WTC11 (cell line): ENCODE measurements at regions of chr2 and their contacts with region 1.

Region 1: DNA sequence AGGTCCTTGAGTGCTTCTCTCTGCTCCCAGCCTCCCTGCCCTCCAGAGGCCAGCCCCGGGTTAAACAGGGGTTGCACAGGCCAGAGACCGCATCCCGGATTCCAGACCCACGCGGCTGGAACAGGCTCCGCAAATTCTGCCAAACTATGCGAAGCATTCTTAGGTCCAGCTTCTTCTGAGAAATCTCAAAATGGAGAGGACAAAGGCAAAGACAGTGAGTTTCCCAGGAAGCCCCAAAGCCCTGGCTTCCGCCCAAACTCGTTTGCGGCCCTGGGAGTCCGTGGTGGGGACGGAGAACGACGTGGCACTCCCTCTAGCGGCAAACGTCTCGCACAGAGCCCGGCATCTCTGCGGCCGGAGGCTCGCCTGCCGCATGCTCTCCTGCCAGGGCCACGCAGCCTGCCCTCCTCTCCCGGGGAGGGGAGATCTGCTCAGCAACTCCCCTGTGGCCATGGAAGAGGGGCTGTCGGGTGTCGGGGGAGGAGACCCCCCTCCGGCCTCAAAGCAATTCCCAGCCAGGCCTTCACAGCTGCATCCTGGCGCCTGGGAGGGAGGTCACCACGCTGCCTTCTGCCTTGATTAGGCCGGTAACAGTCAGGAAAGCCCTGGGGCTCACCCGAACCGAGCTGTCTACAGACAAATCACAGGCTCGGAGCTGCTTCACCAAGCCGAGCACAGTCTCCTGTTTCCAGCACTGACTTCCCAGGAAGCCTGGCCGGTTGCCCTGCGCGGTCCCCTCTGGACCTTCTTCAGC is 33.4 kb upstream of the KLHL29 start:
- DNase-seq: peak; percentile 85
- ATAC-seq: peak; percentile 97
- H3K4me3 Mint-ChIP-seq: no peak overlapping the region
- H3K27ac Mint-ChIP-seq: no peak overlapping the region
- H3K4me1 Mint-ChIP-seq: peaks cover 8% of the 10 kb centered on the region
- H3K27me3 Mint-ChIP-seq: peaks cover 38% of the 10 kb centered on the region
- CTCF ChIP-seq: peak; percentile 65

Region 2: GRCh38 chr2:23330214-23330613 is 21.4 kb before region 1 on chr2:
- CTCF ChIA-PET with region 1: interaction called, 12 read pairs
- POLR2A ChIA-PET with region 1: no interaction called
- DNase-seq: peak; percentile 79
- ATAC-seq: peak; percentile 92
- H3K4me3 Mint-ChIP-seq: no peak overlapping the region
- H3K27ac Mint-ChIP-seq: no peak overlapping the region
- H3K4me1 Mint-ChIP-seq: peaks cover 4% of the 10 kb centered on the region; the same call in 1 of the 2 replicates
- H3K27me3 Mint-ChIP-seq: no peaks in the 10 kb centered on the region; the same call in 1 of the 2 replicates
- CTCF ChIP-seq: no peak

Region 3: GRCh38 chr2:23380562-23381065 is 29.0 kb after region 1 on chr2:
- CTCF ChIA-PET with region 1: no interaction called
- POLR2A ChIA-PET with region 1: no interaction called
- DNase-seq: no peak
- ATAC-seq: no peak; the same call in 1 of the 2 replicates
- H3K4me3 Mint-ChIP-seq: no peak overlapping the region
- H3K27ac Mint-ChIP-seq: no peak overlapping the region; the same call in 1 of the 2 replicates
- H3K4me1 Mint-ChIP-seq: peaks cover 17% of the 10 kb centered on the region
- H3K27me3 Mint-ChIP-seq: peaks cover 45% of the 10 kb centered on the region
- CTCF ChIP-seq: no peak

Region 4: DNA sequence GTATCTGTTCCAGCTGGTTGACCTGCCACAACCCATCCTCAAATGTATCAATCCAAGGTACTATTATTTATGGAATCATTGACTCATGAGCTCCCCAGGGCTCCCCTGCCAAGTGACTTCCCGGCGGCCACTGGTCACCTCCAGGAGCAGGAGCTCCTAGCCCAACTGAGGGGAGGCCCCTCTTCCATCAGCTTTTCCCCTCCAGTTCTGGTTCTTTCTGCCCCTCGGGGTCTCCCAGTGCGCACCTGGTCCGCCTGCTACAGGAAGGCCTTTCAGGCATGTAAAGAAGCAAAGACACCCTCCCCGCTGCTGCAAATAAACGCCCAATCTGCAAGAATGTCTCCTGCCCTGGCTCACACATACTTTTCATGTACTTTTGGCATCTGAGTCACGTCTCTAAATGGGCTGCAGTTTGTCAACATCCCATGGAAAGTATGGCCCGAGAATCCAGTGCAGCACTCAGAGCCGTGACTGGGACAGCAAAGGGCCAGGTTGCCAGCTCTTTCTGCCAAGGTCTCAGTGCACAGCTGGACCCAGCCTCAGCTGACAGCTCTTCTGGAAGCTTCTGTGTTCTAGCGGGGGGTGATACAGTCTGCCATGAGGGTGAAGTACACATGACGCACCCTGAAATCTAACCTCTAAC is 74.8 kb after region 1 on chr2:
- CTCF ChIA-PET with region 1: no interaction called
- POLR2A ChIA-PET with region 1: no interaction called
- DNase-seq: no peak
- ATAC-seq: no peak
- H3K4me3 Mint-ChIP-seq: no peak overlapping the region
- H3K27ac Mint-ChIP-seq: no peak overlapping the region
- H3K4me1 Mint-ChIP-seq: peaks cover 15% of the 10 kb centered on the region
- H3K27me3 Mint-ChIP-seq: no peaks in the 10 kb centered on the region
- CTCF ChIP-seq: no peak